Ascending aorta (tissue), 2 donors: ENCODE measurements at regions of chr2 and their contacts with region 1.

Region 1: DNA sequence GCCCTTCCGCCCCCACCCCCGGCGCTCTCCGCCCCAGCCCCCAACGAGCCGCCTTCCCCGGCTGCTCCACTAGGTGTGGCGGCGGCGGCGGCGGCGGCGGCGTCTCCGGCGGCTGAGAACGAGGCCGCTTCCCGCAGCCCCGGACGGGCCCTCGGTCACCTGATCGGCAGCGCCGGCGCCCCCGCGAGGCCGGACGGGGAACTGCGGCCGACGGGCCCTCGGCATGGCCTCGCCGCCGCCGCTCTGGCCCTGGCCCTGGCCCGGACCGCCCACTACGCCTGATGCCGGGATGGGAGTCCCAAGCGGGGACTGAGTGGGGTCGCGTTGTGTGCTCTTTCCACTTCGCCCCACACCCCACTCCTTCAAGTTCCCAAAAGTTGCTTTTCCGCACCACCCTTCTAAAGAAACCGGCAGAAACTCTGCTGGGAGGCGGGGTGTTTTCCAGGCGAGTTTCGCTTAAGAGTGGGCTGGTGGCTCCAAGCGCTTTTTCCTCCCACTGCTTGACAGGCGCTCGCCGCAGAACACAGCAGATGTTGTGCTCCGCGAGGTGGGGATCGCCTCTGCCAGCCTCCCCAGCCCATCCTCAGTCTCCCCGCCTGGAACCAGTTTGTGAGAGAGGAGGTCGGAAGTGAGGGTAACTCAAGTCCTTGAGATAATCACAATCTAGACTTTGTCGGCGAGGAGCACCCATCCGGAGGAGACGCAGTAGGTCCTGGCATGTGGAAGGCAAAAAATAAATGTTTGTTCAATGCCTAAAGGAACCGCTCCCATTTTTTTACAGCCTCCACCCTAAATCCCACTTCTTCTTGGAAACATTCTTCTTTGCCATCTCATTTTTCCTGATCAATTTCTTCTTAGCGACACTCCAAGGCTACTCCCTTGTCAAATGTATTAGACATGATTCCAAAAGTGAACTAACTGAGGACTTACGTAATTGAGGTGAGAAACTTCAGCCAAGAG is at the start of gene NCKAP1:
- DNase-seq: peak; percentile 54 to 95
- H3K4me3 ChIP-seq: peak within 1 kb of the TSS; percentile 87 to 95
- H3K27ac ChIP-seq: peak within 1 kb of the TSS; percentile 99 to 100
- H3K4me1 ChIP-seq: peaks cover 0 to 22% of the 10 kb centered on the region in 2 donors
- H3K27me3 ChIP-seq: no peaks in the 10 kb centered on the region
- CTCF ChIP-seq: peak; percentile 45 to 97 (median 75)
- total RNA-seq, gene NCKAP1: 55.7 TPM

Region 2: DNA sequence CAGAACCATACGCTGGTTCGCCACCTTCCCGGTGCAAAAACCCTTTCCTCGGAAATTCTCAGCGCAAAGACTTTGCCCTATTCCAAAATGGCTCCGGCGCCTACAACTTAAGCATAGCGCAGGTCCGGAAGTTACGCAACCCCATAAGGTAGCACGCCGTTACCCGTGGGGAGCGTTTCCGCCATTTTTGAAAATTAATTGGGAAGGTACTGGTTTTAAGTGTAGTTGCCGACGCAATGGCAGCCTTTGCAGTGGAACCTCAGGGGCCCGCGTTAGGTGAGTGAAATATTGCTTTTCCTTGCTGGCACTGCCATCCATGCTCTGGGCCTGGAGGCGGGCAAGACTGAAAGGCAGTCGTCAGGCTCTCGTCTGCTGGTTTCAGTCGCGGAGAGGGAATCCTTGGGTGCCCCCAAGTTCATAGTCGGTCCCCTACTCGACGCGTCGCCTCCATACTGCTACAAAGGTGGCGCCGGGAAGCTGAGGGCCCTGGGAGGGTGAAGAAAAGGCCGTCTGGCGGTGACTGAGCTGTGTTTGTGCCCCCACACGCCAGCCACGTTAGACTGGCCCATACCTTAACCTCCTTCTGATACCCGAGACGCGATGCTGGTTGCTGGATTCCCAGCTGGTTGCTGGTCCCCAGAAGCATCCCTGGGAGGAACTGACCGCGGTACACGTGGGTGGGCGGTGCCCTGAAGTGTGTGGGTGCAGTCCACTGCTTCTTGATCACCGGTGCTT is 85.8 kb after region 1 on chr2 and contains the start of gene NUP35:
- intact Hi-C with region 1: loop called (anchors 2 kb)
- DNase-seq: peak; percentile 43 to 93
- H3K4me3 ChIP-seq: peak within 1 kb of the TSS; percentile 81 to 94
- H3K27ac ChIP-seq: peak within 1 kb of the TSS; percentile 87
- H3K4me1 ChIP-seq: peaks cover 0 to 7% of the 10 kb centered on the region in 2 donors
- H3K27me3 ChIP-seq: no peaks in the 10 kb centered on the region
- CTCF ChIP-seq: no peak
- total RNA-seq, gene NUP35: not detected

Region 3: GRCh38 chr2:183505911-183506310 is 467.3 kb after region 1 on chr2:
- intact Hi-C with region 1: no loop called
- DNase-seq: no peak
- H3K4me3 ChIP-seq: no peak overlapping the region
- H3K27ac ChIP-seq: no peak overlapping the region
- H3K4me1 ChIP-seq: no peaks in the 10 kb centered on the region
- H3K27me3 ChIP-seq: no peaks in the 10 kb centered on the region
- CTCF ChIP-seq: no peak